ENCODE measurements at regions of chr6 and their contacts with region 1.

Region 1: DNA sequence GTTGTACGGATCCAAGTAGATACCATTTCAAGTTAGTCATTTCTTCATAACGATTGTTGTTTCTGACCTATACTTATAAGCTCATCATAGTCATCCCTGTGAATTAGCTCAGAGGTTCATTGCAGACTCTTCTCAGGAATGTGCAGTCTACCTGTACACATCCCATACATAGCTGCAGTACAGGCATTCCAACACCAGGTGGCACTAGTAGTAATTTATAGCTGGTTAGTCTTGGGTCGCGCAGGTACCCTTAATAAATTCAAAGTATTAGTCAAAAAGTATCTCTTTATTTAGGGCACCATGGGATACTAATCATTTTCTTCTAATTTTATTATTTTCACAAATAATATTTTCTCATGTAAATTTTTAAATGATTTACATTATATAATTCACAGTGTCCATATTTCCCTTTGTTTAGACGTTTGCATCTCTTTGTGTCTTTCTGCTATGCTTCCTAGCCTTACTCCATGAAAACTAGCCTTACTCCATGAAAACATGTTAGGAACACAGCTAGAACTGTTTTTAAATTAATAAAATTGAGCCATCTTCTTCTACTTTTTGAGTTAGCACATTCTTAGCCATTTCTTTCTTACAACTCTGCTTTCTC is 128.6 kb upstream of the FAM83B start:
- DNase-seq: peak; percentile 63
- H3K27ac ChIP-seq: no peak overlapping the region
- CTCF ChIP-seq: peak; percentile 89

Region 2: GRCh38 chr6:55023230-55023629 is 305.3 kb after region 1 on chr6:
- CTCF ChIA-PET with region 1: no interaction called
- POLR2A ChIA-PET with region 1: no interaction called
- DNase-seq: no peak
- H3K27ac ChIP-seq: no peak overlapping the region
- CTCF ChIP-seq: no peak

Region 3: GRCh38 chr6:55069132-55069781 is 351.3 kb after region 1 on chr6:
- CTCF ChIA-PET with region 1: interaction called, 10 read pairs
- POLR2A ChIA-PET with region 1: no interaction called
- DNase-seq: peak; percentile 35
- H3K27ac ChIP-seq: no peak overlapping the region
- CTCF ChIP-seq: peak; percentile 73